GM23248 (cell line): ENCODE measurements at regions of chr6 and their contacts with region 1.

Region 1: DNA sequence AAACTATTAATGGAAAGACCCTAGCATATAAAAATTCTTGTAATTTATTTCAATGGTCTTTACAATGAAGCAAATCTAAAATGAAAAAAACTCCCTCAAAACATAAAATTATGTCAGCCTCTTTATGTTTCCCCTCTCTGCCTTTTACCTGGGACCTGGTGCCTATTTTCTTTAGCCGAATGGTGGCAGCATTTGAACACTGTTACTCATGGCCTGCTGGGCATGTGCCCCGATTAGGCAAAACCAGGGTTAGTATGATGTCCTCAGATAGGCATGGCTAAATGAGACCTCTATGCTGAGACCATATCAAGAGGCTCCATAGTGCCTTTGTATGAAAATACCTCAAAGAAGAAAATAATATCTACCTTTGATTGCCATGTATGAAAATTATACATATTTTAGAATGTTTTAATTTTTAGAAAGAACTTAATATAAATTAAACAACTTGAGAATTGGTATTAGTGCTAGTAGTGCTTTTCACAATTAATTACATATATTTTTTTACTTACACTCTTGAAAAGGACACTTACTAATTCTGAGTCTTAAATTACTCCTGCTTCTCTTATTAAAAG is 22.5 kb upstream of the C6orf58 start:
- DNase-seq: peak; percentile 78
- H3K4me3 ChIP-seq: no peak overlapping the region
- H3K27ac ChIP-seq: no peak overlapping the region
- H3K4me1 ChIP-seq: peaks cover 12% of the 10 kb centered on the region
- H3K27me3 ChIP-seq: no peaks in the 10 kb centered on the region

Region 2: GRCh38 chr6:127641905-127642304 is 87.4 kb after region 1 on chr6:
- in situ Hi-C with region 1: loop called (anchors 10 kb)
- DNase-seq: peak; percentile 60
- H3K4me3 ChIP-seq: no peak overlapping the region
- H3K27ac ChIP-seq: no peak overlapping the region
- H3K4me1 ChIP-seq: no peaks in the 10 kb centered on the region
- H3K27me3 ChIP-seq: peaks cover 8% of the 10 kb centered on the region; the same call in 1 of the 2 replicates

Region 3: GRCh38 chr6:127725821-127726220 is 171.3 kb after region 1 on chr6:
- in situ Hi-C with region 1: no loop called
- DNase-seq: no peak
- H3K4me3 ChIP-seq: no peak overlapping the region
- H3K27ac ChIP-seq: no peak overlapping the region
- H3K4me1 ChIP-seq: no peaks in the 10 kb centered on the region
- H3K27me3 ChIP-seq: peaks cover 3% of the 10 kb centered on the region; the same call in 1 of the 2 replicates